ENCODE measurements at regions of chr1 and their contacts with region 1.

Region 1: DNA sequence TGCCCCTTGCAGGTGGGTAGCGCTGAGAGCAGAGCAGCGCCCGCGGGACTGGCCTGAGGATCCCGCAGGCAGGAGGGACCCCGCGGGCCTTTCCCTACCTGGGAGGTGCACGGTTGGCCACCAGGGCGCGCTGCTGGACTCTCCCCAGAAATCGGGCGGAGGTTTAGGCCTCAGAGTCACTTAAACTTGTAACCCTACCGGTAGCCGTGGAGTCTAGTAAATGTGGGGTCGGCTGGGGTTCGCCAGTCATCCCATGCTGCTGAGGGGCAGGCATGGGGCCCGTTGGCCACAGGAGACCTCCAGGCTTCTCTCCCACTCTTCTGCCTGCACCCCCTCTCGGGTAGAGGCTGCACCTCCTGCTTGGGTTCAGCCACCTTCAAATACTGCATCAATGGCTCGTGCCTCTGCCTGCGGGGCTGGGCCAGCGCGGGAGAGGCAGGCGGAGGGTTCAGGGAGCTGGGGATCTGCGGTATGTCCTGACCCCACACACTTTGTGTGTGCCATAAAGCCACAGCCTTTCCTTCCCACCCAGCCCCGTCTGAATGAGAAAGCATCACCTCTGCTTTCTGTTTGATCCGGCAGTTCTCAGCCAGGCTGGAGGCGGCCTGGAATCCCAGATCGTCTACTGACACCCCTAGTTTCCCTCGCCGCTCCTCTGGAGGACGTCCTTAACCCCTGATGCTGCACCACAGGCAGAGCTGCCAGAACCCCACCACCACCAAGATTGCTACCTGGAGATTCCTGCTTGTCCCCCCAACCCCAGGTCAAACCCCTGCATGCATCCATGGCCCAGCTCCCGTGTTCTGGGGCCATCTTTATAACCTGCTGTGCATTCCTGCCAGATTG is 12.3 kb upstream of the GSTM4 start:
- DNase-seq: peak; percentile 81 to 88 (median 87)
- H3K4me3 ChIP-seq: peak overlapping the region in 2 of 7 experiments; percentile 26 to 43
- H3K27ac ChIP-seq: no peak overlapping the region
- H3K4me1 ChIP-seq: peaks cover 0 to 43% (median 16%) of the 10 kb centered on the region in 4 experiments
- H3K27me3 ChIP-seq: no peaks in the 10 kb centered on the region

Region 2: GRCh38 chr1:109499661-109500536 is 143.7 kb before region 1 on chr1:
- CTCF ChIA-PET with region 1: interaction called, 11 read pairs
- POLR2A ChIA-PET with region 1: no interaction called
- DNase-seq: peak; percentile 44 to 71 (median 62)
- H3K4me3 ChIP-seq: no peak overlapping the region
- H3K27ac ChIP-seq: no peak overlapping the region
- H3K4me1 ChIP-seq: peaks cover 0 to 26% (median 15%) of the 10 kb centered on the region in 4 experiments
- H3K27me3 ChIP-seq: no peaks in the 10 kb centered on the region

Region 3: GRCh38 chr1:109598655-109599054 is 45.0 kb before region 1 on chr1:
- CTCF ChIA-PET with region 1: interaction called, 78 read pairs
- POLR2A ChIA-PET with region 1: no interaction called
- DNase-seq: peak in 2 of 3 donors; percentile 34 to 35
- H3K4me3 ChIP-seq: no peak overlapping the region
- H3K27ac ChIP-seq: no peak overlapping the region
- H3K4me1 ChIP-seq: peaks cover 0 to 3% (median 0%) of the 10 kb centered on the region in 4 experiments
- H3K27me3 ChIP-seq: no peaks in the 10 kb centered on the region

Region 4: DNA sequence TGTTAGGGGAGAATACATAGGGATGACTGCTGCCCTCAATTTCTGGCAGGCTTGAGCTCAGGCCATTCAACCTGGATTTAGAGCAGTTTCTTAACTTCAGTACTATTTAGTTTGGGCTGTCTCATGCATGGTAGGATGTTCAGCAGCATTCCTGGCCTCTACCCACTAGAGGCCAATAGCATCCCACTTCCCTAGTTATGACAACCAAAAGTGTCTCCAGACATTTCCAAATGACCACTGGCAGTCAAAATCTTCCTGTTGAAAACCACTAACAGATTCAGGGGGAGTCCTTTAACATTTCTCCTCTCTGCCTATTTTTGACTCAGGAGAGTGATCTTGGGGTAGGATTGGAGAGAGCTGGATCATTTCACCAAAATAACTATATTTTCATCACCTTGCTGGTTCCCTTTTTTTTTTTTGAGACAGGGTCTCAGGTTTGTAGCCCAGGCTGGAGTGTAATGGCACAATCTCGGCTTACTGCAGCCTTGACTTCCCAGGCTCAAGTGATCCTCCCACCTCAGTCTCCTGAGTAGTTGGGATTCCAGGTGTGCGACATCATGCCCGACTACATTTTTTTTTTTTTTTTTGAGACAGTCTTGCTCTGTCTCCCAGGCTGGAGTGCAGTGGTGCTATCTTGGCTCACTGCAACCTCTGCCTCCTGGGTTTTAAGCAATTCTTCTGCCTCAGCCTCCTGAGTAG is 32.9 kb before region 1 on chr1:
- CTCF ChIA-PET with region 1: interaction called, 17 read pairs
- POLR2A ChIA-PET with region 1: no interaction called
- DNase-seq: no peak
- H3K4me3 ChIP-seq: no peak overlapping the region
- H3K27ac ChIP-seq: no peak overlapping the region
- H3K4me1 ChIP-seq: peaks cover 2 to 17% (median 7%) of the 10 kb centered on the region in 4 experiments
- H3K27me3 ChIP-seq: no peaks in the 10 kb centered on the region

Region 5: GRCh38 chr1:109630081-109630897 is 13.3 kb before region 1 on chr1:
- CTCF ChIA-PET with region 1: interaction called, 233 read pairs
- POLR2A ChIA-PET with region 1: interaction called, 4 read pairs
- DNase-seq: peak in 2 of 3 donors; percentile 51 to 53
- H3K4me3 ChIP-seq: no peak overlapping the region
- H3K27ac ChIP-seq: no peak overlapping the region
- H3K4me1 ChIP-seq: peaks cover 0 to 9% (median 6%) of the 10 kb centered on the region in 4 experiments
- H3K27me3 ChIP-seq: no peaks in the 10 kb centered on the region

Region 6: DNA sequence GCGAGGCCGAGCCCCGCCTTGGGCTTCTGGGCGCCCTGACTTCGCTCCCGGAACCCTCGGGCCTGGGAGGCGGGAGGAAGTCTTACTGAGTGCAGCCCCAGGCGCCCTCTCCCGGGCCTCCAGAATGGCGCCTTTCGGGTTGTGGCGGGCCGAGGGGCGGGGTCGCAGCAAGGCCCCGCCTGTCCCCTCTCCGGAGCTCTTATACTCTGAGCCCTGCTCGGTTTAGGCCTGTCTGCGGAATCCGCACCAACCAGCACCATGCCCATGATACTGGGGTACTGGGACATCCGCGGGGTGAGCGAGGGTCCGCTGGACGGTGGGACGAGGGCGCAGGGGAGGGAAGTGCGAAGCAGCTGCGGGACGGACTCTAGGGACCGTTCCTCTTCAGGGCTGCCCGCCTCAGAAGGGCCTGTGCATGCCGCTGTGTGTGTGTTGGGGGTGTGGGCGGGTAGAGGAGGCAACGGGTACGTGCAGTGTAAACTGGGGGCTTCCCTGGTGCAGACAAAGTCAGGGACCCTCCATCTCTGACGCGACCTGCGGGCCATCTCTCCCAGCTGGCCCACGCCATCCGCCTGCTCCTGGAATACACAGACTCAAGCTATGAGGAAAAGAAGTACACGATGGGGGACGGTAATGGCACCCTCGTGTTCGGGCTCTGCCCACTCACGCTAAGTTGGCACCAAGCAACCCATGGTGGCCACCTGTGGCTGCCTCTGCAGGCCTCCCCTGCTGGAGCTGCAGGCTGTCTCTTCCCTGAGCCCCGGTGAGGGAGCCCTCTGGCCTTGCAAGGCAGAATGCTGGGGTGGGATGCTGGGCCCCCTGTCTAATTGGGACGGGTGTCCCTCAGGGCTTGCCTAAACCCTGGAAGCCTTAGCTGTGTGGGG is 44.2 kb after region 1 on chr1 and contains the start of gene GSTM1:
- CTCF ChIA-PET with region 1: interaction called, 23 read pairs
- POLR2A ChIA-PET with region 1: no interaction called
- DNase-seq: peak in 1 of 3 donors; percentile 73
- H3K4me3 ChIP-seq: peak within 1 kb of the TSS in 5 of 7 experiments; percentile 23 to 84 (median 54)
- H3K27ac ChIP-seq: peak within 1 kb of the TSS in 1 of 2 experiments; percentile 43
- H3K4me1 ChIP-seq: peaks cover 0 to 14% (median 1%) of the 10 kb centered on the region in 4 experiments
- H3K27me3 ChIP-seq: no peaks in the 10 kb centered on the region

Region 7: GRCh38 chr1:109984456-109985275 is 341.1 kb after region 1 on chr1 and contains the start of gene AHCYL1:
- CTCF ChIA-PET with region 1: interaction called, 36 read pairs
- POLR2A ChIA-PET with region 1: no interaction called
- DNase-seq: peak; percentile 98 to 99 (median 98)
- H3K4me3 ChIP-seq: peak within 1 kb of the TSS; percentile 76 to 90 (median 81)
- H3K27ac ChIP-seq: peak within 1 kb of the TSS; percentile 84 to 91
- H3K4me1 ChIP-seq: peaks cover 9 to 33% (median 17%) of the 10 kb centered on the region in 4 experiments
- H3K27me3 ChIP-seq: no peaks in the 10 kb centered on the region

Region 8: GRCh38 chr1:110890474-110891196 is 1247.0 kb after region 1 on chr1:
- CTCF ChIA-PET with region 1: no interaction called
- POLR2A ChIA-PET with region 1: no interaction called
- DNase-seq: peak in 2 of 3 donors; percentile 52 to 74
- H3K4me3 ChIP-seq: peak overlapping the region in 1 of 7 experiments; percentile 2
- H3K27ac ChIP-seq: peak overlapping the region in 1 of 2 experiments; percentile 50
- H3K4me1 ChIP-seq: peaks cover 3 to 16% (median 8%) of the 10 kb centered on the region in 4 experiments
- H3K27me3 ChIP-seq: no peaks in the 10 kb centered on the region

Measured in common myeloid progenitor, CD34-positive (primary cell).